Heart left ventricle (tissue), 16 donors: ENCODE measurements at regions of chr2 and their contacts with region 1.

Region 1: GRCh38 chr2:112733456-112733855 is 12.6 kb downstream of the NT5DC4 start:
- DNase-seq: no peak
- ATAC-seq: no peak
- H3K4me3 ChIP-seq: no peak overlapping the region
- H3K27ac ChIP-seq: no peak overlapping the region
- H3K4me1 ChIP-seq: peaks cover 0 to 13% (median 0%) of the 10 kb centered on the region in 12 donors
- H3K27me3 ChIP-seq: peaks cover 0 to 8% (median 0%) of the 10 kb centered on the region in 9 donors
- CTCF ChIP-seq: no peak
- POLR2A ChIP-seq: no peak

Region 2: GRCh38 chr2:112618383-112618782 is 115.1 kb before region 1 on chr2:
- intact Hi-C with region 1: loop called in 2 of 10 experiments (anchors 5 kb)
- DNase-seq: peak in 1 of 5 donors; percentile 55
- ATAC-seq: peak in 2 of 4 donors; percentile 53 to 73
- H3K4me3 ChIP-seq: no peak overlapping the region
- H3K27ac ChIP-seq: no peak overlapping the region
- H3K4me1 ChIP-seq: no peaks in the 10 kb centered on the region
- H3K27me3 ChIP-seq: no peaks in the 10 kb centered on the region
- CTCF ChIP-seq: no peak
- POLR2A ChIP-seq: no peak

Region 3: DNA sequence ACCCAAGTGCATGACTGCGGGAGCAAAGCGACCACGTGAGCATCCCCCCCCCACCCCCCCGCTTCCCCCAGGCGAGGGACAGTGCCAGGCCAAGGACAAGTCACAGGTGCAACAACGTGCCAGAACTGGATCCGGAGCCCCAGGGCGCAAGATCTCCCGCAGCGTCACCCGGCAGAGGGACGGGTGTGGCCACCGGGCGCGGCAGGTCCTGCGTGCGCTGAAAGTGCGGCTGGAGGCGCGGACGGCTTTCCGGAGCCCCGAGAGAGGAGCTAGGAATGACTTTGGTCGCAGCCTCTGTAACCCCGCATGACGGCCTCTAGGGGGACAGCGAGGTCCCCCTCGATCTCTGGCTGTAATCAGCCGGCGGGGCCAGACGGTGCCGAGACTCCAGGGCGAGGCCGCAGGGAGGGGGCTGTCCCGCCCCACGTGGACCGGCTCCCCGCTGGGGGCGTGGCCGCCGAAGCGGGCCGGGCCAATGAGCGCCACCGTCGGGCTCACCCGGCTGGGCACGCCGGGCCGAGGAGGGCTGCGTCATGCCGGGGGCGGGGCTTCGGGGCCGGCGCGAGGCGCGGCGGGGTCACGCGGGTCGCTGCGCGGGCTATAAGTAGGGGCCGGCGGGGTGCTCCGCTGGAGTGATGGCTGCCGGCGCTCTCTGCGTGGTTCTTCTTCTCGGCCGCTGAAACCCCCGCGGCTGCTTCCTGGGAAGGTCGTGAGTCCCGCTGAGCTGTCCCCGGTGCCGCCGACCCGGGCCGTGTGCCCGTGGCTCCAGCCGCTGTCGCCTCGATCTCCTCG is 88.0 kb before region 1 on chr2 and contains the start of gene SLC20A1:
- intact Hi-C with region 1: no loop called
- DNase-seq: peak; percentile 97 to 99 (median 97)
- ATAC-seq: peak; percentile 96 to 99 (median 97)
- H3K4me3 ChIP-seq: peak within 1 kb of the TSS; percentile 73 to 98 (median 86)
- H3K27ac ChIP-seq: peak within 1 kb of the TSS; percentile 86 to 99 (median 98)
- H3K4me1 ChIP-seq: peaks cover 2 to 81% (median 32%) of the 10 kb centered on the region in 12 donors
- H3K27me3 ChIP-seq: no peaks in the 10 kb centered on the region
- CTCF ChIP-seq: peak in 11 of 12 donors; percentile 15 to 62 (median 41)
- POLR2A ChIP-seq: peak; percentile 96 to 100
- total RNA-seq, gene SLC20A1: 5.6 to 51.7 (median 12.0) TPM